ENCODE measurements at regions of chr5 and their contacts with region 1.

Region 1: DNA sequence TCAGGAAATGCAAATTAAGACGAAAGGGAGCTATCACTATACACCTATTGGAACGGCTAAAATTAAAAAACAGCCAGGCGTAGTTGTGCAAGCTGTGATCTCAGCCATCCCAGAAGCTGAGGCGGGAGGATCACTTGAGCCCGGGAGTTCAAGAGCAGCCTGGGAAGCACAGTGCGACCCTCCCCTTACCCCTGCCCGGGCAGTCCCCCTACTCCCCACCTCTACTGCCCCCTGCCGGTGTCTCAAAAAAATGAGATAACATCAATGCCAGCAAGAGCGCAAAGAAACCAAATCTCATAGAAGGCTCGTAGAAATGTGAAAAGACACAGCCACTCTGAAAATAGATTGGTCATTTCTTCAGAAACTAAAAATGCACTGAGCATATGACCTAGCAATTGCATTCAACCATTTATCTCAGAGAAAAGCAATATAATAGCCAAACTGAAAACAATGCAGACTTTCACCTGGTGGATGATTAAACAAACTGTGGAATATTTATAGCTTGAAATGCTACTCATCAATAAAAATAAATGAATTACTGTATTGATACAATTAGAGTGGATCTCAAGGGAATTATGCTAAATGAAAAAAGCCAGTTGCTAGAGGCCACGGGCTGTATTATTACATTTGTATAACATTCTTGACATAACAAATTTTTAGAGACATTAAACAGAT is 20.6 kb downstream of the OR2V2 start:
- DNase-seq: no peak
- ATAC-seq: no peak
- H3K4me3 ChIP-seq: peak overlapping the region; percentile 49 to 72
- H3K27ac ChIP-seq: peak overlapping the region; percentile 86
- H3K4me1 ChIP-seq: peaks cover 22% of the 10 kb centered on the region
- H3K27me3 ChIP-seq: no peaks in the 10 kb centered on the region
- CTCF ChIP-seq: peak; percentile 92

Region 2: GRCh38 chr5:180799194-180799593 is 368.8 kb before region 1 on chr5:
- CTCF ChIA-PET with region 1: interaction called, 15 read pairs
- POLR2A ChIA-PET with region 1: no interaction called
- in situ Hi-C with region 1: no loop called
- intact Hi-C with region 1: no loop called
- DNase-seq: no peak
- ATAC-seq: no peak
- H3K4me3 ChIP-seq: no peak overlapping the region
- H3K27ac ChIP-seq: no peak overlapping the region
- H3K4me1 ChIP-seq: peaks cover 32% of the 10 kb centered on the region
- H3K27me3 ChIP-seq: no peaks in the 10 kb centered on the region
- CTCF ChIP-seq: peak; percentile 65

Region 3: GRCh38 chr5:180868960-180869359 is 299.0 kb before region 1 on chr5:
- CTCF ChIA-PET with region 1: interaction called, 6 read pairs
- POLR2A ChIA-PET with region 1: no interaction called
- in situ Hi-C with region 1: no loop called
- intact Hi-C with region 1: loop called (anchors 5 kb)
- DNase-seq: peak; percentile 79
- ATAC-seq: peak; percentile 95
- H3K4me3 ChIP-seq: no peak overlapping the region
- H3K27ac ChIP-seq: no peak overlapping the region
- H3K4me1 ChIP-seq: no peaks in the 10 kb centered on the region
- H3K27me3 ChIP-seq: no peaks in the 10 kb centered on the region
- CTCF ChIP-seq: peak; percentile 90

Region 4: GRCh38 chr5:180990086-180990881 is 177.7 kb before region 1 on chr5:
- CTCF ChIA-PET with region 1: no interaction called
- POLR2A ChIA-PET with region 1: no interaction called
- in situ Hi-C with region 1: no loop called
- intact Hi-C with region 1: no loop called
- DNase-seq: no peak
- ATAC-seq: no peak
- H3K4me3 ChIP-seq: no peak overlapping the region
- H3K27ac ChIP-seq: no peak overlapping the region
- H3K4me1 ChIP-seq: no peaks in the 10 kb centered on the region
- H3K27me3 ChIP-seq: no peaks in the 10 kb centered on the region
- CTCF ChIP-seq: no peak

Region 5: DNA sequence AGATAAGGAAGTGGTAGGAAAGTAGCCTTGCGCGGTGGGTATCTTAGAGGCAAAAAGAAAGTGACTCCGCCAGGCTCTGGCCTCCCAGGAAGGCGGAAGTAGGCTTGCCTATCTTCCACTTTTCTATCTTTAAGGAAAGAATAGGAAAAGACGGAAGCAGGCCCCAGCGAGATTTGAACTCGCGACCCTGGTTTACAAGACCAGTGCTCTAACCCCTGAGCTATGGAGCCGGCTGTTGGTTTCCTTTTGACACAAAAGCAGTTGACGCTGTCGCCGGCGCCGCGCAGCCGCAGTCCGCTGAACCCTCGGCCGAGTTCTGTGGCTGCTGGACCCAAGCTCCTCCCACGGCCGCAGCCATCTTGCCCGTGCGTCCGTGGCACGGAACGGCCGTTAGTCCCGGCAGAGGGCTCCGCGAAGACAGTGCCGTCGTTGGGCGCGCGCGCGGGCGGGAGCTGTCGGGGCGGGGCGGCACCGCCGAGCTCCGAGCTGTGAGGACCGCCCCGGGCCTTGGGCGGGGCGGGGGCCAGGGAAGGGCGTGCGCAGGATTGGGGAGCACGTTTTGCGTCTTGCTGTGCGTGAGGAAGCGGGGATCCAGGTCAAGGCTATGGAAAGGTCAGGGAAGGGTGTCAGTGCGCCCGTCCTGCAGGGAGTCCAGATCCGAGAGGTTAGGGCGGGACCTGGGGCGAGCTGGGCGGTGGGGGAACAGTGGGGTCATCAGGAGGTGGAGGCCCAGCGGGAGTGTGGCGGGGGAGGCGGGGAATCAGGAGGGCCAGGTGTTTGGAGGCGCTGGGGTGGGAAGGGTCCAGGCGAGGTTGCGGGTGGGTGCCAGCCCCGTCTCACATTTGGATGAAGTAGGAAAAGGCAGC is 23.8 kb after region 1 on chr5:
- CTCF ChIA-PET with region 1: interaction called, 3 read pairs
- POLR2A ChIA-PET with region 1: no interaction called
- in situ Hi-C with region 1: no loop called
- intact Hi-C with region 1: loop called (anchors 1 kb)
- DNase-seq: no peak
- ATAC-seq: peak; percentile 75
- H3K4me3 ChIP-seq: peak overlapping the region; percentile 85 to 98
- H3K27ac ChIP-seq: peak overlapping the region; percentile 82
- H3K4me1 ChIP-seq: peaks cover 15% of the 10 kb centered on the region
- H3K27me3 ChIP-seq: no peaks in the 10 kb centered on the region
- CTCF ChIP-seq: no peak

Measured in Panc1 (cell line).